ENCODE measurements at regions of chr15 and their contacts with region 1.

Region 1: GRCh38 chr15:77070495-77071304 is at the start of gene TSPAN3:
- DNase-seq: peak; percentile 83 to 95 (median 92)
- ATAC-seq: peak; percentile 99
- H3K4me3 ChIP-seq: peak within 1 kb of the TSS; percentile 47 to 74
- H3K4me3 Mint-ChIP-seq: peak within 1 kb of the TSS; percentile 85
- H3K27ac ChIP-seq: peak within 1 kb of the TSS; percentile 52 to 56
- H3K27ac Mint-ChIP-seq: peak within 1 kb of the TSS; percentile 76
- H3K4me1 ChIP-seq: peaks cover 17% of the 10 kb centered on the region
- H3K4me1 Mint-ChIP-seq: peaks cover 36% of the 10 kb centered on the region
- H3K27me3 ChIP-seq: no peaks in the 10 kb centered on the region
- H3K27me3 Mint-ChIP-seq: peaks cover 3% of the 10 kb centered on the region
- CTCF ChIP-seq: no peak
- total RNA-seq, gene TSPAN3: 21.4 to 22.7 TPM

Region 2: GRCh38 chr15:76931397-76932007 is 139.2 kb before region 1 on chr15 and contains the start of gene RCN2:
- CTCF ChIA-PET with region 1: no interaction called
- POLR2A ChIA-PET with region 1: no interaction called
- intact Hi-C with region 1: loop called in 1 of 2 experiments (anchors 1 kb)
- DNase-seq: peak; percentile 81 to 96 (median 93)
- ATAC-seq: peak; percentile 97
- H3K4me3 ChIP-seq: peak within 1 kb of the TSS; percentile 62 to 63
- H3K4me3 Mint-ChIP-seq: peak within 1 kb of the TSS; percentile 90
- H3K27ac ChIP-seq: peak within 1 kb of the TSS; percentile 63 to 65
- H3K27ac Mint-ChIP-seq: peak within 1 kb of the TSS; percentile 91
- H3K4me1 ChIP-seq: peaks cover 24% of the 10 kb centered on the region
- H3K4me1 Mint-ChIP-seq: peaks cover 34% of the 10 kb centered on the region
- H3K27me3 ChIP-seq: no peaks in the 10 kb centered on the region
- H3K27me3 Mint-ChIP-seq: no peaks in the 10 kb centered on the region
- CTCF ChIP-seq: no peak
- total RNA-seq, gene RCN2: 25.9 to 29.7 TPM

Region 3: GRCh38 chr15:77013776-77014131 is 56.9 kb before region 1 on chr15:
- CTCF ChIA-PET with region 1: no interaction called
- POLR2A ChIA-PET with region 1: interaction called, 3 read pairs
- intact Hi-C with region 1: loop called in 1 of 2 experiments (anchors 1 kb)
- DNase-seq: peak; percentile 57 to 94 (median 90)
- ATAC-seq: peak; percentile 77
- H3K4me3 ChIP-seq: peak overlapping the region; percentile 29 to 30
- H3K4me3 Mint-ChIP-seq: peak overlapping the region; percentile 82
- H3K27ac ChIP-seq: peak overlapping the region; percentile 35 to 85
- H3K27ac Mint-ChIP-seq: peak overlapping the region; percentile 97
- H3K4me1 ChIP-seq: peaks cover 97% of the 10 kb centered on the region
- H3K4me1 Mint-ChIP-seq: peaks cover 92% of the 10 kb centered on the region
- H3K27me3 ChIP-seq: no peaks in the 10 kb centered on the region
- H3K27me3 Mint-ChIP-seq: no peaks in the 10 kb centered on the region
- CTCF ChIP-seq: no peak

Region 4: DNA sequence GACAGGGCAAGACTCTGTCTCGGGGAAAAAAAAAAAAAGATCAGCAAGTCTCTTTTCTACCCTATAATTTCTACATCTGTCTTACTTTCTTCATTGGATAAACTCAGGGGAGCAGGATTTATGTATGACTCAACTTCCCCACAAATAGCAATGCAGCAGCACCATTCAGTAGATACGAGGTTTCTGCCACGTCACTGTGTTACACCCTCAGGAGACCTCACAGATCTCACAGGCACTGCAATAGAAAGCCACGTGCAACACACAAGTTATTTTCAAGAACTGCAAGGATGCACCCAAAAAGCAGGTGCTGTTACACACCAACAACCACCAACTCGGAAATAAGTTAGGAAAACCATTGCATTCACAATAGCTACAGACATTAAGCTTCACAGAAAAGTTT is 30.0 kb before region 1 on chr15:
- CTCF ChIA-PET with region 1: no interaction called
- POLR2A ChIA-PET with region 1: interaction called, 3 read pairs
- intact Hi-C with region 1: loop called in 1 of 2 experiments (anchors 2 kb)
- DNase-seq: peak in 1 of 9 experiments; percentile 21
- ATAC-seq: no peak
- H3K4me3 ChIP-seq: no peak overlapping the region
- H3K4me3 Mint-ChIP-seq: no peak overlapping the region
- H3K27ac ChIP-seq: peak overlapping the region in 1 of 2 experiments; percentile 14
- H3K27ac Mint-ChIP-seq: peak overlapping the region; percentile 24
- H3K4me1 ChIP-seq: no peaks in the 10 kb centered on the region
- H3K4me1 Mint-ChIP-seq: peaks cover 11% of the 10 kb centered on the region
- H3K27me3 ChIP-seq: no peaks in the 10 kb centered on the region
- H3K27me3 Mint-ChIP-seq: no peaks in the 10 kb centered on the region
- CTCF ChIP-seq: no peak

Region 5: DNA sequence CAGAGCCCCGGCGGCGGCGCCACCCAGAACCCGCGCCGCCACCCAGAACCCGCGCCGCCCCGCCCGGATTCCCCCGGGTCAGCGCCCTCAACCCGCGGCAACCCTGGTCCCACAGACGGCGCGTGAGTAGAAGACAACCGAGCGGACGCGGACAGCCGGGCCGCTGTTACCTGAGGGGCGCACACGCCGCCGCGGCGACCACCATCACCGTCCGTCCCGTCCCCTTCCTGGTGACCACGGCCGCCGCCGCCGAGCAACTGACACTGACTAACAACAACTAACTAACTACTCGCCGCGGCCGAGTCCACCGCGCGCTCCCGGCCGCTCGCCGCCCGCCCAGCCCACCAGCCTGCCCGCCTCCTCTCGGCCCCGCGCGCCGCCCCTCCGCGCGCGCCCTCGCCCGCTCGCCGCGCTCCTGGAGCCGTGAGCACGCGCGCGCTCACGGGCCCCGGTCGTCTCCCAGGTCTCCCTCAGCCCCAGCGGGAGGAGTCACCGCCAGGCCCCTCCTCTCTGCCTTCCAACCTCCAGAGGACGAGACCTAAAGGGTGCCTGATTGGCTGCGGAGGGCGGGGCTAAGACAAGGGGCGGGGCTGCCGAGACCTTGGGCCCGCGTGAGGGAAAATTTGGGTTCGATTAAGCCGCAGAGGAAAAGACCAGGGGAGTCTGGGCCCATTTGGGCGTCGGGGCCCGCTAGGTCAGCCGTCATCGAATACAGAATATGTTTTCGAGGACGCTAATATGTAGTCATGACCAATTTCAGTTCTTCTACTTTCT is 349.3 kb after region 1 on chr15 and contains the start of gene PEAK1:
- CTCF ChIA-PET with region 1: no interaction called
- POLR2A ChIA-PET with region 1: no interaction called
- intact Hi-C with region 1: loop called (anchors 1 to 2 kb)
- DNase-seq: peak; percentile 99 to 100 (median 100)
- ATAC-seq: peak; percentile 99
- H3K4me3 ChIP-seq: peak within 1 kb of the TSS; percentile 74 to 75
- H3K4me3 Mint-ChIP-seq: peak within 1 kb of the TSS; percentile 97
- H3K27ac ChIP-seq: peak within 1 kb of the TSS; percentile 61 to 93
- H3K27ac Mint-ChIP-seq: peak within 1 kb of the TSS; percentile 97
- H3K4me1 ChIP-seq: peaks cover 17% of the 10 kb centered on the region
- H3K4me1 Mint-ChIP-seq: peaks cover 49% of the 10 kb centered on the region
- H3K27me3 ChIP-seq: no peaks in the 10 kb centered on the region
- H3K27me3 Mint-ChIP-seq: no peaks in the 10 kb centered on the region
- CTCF ChIP-seq: no peak
- total RNA-seq, gene PEAK1: 12.4 to 15.7 TPM

Measured in CD8-positive, alpha-beta T cell (primary cell).